Gastrocnemius medialis (tissue), 4 donors: ENCODE measurements at regions of chr2 and their contacts with region 1.

Region 1: DNA sequence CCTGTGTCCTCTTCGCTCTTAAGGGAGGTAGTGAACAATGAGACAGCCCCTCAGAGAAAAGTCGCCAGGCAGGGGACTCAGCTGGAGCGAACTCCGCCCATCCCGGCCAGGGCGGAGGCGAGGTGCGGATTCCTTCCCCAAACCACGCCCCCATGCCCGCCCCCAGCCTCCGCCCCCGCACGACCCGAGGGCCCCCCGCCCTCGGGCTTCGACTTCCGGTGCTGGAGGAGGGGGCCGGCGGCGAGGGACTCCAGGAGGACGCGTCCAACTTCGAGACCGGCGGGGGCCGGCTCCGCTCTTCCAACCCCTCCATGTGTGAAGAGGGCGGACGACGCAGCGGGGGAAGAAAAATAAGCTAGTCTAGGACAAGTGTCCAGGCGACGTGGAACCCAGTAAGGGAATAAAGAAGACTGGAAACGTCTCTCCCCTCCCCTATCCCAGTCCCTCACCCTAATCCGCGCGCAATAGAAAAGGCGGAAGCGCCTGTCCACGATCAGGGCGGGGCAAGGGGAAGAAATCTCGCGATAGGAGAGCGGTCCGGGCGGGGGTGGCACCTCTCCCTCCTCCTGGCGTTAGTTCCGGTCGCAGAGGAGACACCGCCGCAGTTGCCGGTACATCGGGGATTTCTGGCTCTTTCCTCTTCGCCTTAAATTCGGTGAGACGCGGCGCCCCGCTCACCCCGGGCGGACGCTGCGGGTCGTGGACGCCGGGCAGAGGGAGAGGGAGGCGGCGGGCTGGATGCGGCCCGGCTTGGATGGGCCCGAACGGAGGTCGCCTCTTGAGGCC is at the start of gene BZW1:
- DNase-seq: peak; percentile 95
- ATAC-seq: peak; percentile 86 to 88
- H3K4me3 ChIP-seq: peak within 1 kb of the TSS; percentile 77 to 98 (median 92)
- H3K27ac ChIP-seq: peak within 1 kb of the TSS; percentile 95 to 99 (median 98)
- H3K4me1 ChIP-seq: peaks cover 31 to 34% of the 10 kb centered on the region in 2 donors
- H3K27me3 ChIP-seq: no peaks in the 10 kb centered on the region
- CTCF ChIP-seq: no peak
- POLR2A ChIP-seq: peak; percentile 95 to 96
- total RNA-seq, gene BZW1: 204 to 317 (median 240) TPM

Region 2: GRCh38 chr2:200713003-200713703 is 98.4 kb before region 1 on chr2:
- in situ Hi-C with region 1: loop called (anchors 10 to 25 kb)
- intact Hi-C with region 1: loop called (anchors 1 kb)
- DNase-seq: peak; percentile 83 to 89
- ATAC-seq: peak; percentile 99 to 100
- H3K4me3 ChIP-seq: peak overlapping the region; percentile 33 to 51 (median 42)
- H3K27ac ChIP-seq: peak overlapping the region; percentile 70 to 82 (median 74)
- H3K4me1 ChIP-seq: peaks cover 0 to 3% of the 10 kb centered on the region in 2 donors
- H3K27me3 ChIP-seq: no peaks in the 10 kb centered on the region
- CTCF ChIP-seq: peak; percentile 73 to 89 (median 86)
- POLR2A ChIP-seq: peak; percentile 66 to 80

Region 3: DNA sequence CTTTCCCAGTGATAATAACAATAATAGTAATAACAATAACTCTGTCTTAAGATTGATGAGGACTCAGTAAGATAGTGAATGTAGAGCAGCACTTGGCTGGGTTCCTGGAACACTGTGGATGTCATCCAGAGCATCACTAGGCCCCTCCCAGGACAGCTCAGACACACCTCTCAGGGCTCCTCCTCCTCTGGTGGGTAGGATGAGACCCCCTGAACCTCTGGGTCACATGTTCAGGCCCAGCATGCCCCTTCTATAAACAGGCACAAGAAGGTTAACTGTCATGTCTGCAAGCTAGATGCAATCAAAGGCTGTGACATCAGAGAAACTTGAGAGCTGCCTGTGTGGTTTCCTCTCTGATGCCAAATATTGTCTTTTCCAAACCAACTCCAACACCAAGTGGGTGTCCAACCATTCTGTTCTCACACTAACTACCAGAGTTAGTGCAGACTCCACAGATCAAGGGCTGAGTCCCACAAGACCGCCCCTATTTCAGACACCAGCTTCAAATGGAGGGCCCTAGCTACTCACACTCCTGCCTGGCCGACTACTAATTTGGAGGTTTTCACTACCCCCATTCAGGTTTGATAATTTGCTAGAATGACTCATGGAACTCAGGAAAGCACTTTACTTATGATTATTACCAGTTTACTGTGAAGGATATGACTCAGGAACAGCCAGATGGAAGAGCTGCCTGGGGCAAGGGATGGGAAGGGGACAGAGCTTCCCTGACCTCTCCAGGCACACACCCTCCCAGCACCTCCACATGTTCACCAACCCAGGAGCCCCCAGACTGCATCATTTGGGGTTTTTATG is 46.2 kb before region 1 on chr2:
- in situ Hi-C with region 1: no loop called
- intact Hi-C with region 1: loop called (anchors 1 kb)
- DNase-seq: peak in 1 of 2 donors; percentile 50
- ATAC-seq: peak in 1 of 2 donors; percentile 49
- H3K4me3 ChIP-seq: no peak overlapping the region
- H3K27ac ChIP-seq: peak overlapping the region; percentile 75 to 86 (median 82)
- H3K4me1 ChIP-seq: peaks cover 19 to 23% of the 10 kb centered on the region in 2 donors
- H3K27me3 ChIP-seq: no peaks in the 10 kb centered on the region
- CTCF ChIP-seq: no peak
- POLR2A ChIP-seq: no peak

Region 4: DNA sequence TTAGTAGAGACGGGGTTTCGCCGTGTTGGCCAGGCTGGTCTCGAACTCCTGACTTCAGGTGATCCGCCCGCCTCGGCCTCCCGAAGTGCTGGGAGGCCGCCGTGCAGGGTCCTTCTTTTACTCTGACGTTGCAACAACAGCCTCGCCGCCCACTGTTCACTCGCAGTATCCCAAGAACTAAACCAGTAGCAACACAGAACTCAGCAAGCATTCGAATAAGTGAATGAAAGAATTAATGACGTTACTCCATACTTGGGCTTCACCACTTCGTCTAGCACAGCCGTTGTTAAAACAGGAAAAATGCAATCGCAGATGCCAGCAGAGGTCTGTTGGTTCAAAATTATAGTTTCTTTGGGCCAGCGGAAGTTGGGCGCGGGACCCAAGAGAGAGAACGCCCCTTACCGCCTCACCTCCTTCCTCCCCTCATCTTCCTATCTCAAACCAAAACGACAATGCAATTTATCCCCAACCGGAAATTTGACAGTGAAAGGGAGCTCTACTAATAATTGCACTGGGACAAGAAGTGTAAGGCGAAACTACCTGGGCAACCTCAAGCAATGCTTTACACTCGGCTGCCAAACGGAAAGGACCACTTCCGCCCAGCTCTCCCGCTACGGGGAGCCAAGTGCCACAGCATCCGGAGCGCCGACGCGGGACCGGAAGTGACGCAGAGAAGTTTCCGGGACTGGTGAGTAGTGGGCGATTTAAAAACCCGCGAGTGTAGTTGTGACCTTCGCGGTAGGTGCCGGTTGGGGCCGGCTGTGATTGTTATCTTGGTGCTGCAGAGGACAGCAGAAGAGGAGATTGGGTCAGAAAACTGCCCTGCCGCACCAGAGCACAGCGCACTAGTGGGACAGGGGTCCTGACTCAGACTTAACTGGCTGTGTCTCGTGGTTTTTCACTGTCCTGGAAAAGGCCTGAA is 77.4 kb after region 1 on chr2 and contains the starts of genes NIF3L1 and PPIL3:
- in situ Hi-C with region 1: no loop called
- intact Hi-C with region 1: loop called (anchors 2 kb)
- DNase-seq: peak; percentile 90 to 93
- ATAC-seq: peak; percentile 95 to 97
- H3K4me3 ChIP-seq: peak within 1 kb of the TSS; percentile 60 to 91 (median 74)
- H3K27ac ChIP-seq: peak within 1 kb of the TSS; percentile 90 to 94 (median 94)
- H3K4me1 ChIP-seq: peaks cover 13 to 22% of the 10 kb centered on the region in 2 donors
- H3K27me3 ChIP-seq: no peaks in the 10 kb centered on the region
- CTCF ChIP-seq: no peak
- POLR2A ChIP-seq: peak; percentile 50 to 57
- total RNA-seq, gene NIF3L1: 17.0 to 28.7 (median 22.4) TPM
- total RNA-seq, gene PPIL3: 8.4 to 29.2 (median 14.3) TPM

Region 5: GRCh38 chr2:201018636-201019035 is 207.1 kb after region 1 on chr2:
- in situ Hi-C with region 1: no loop called
- intact Hi-C with region 1: no loop called
- DNase-seq: no peak
- ATAC-seq: no peak
- H3K4me3 ChIP-seq: no peak overlapping the region
- H3K27ac ChIP-seq: no peak overlapping the region
- H3K4me1 ChIP-seq: no peaks in the 10 kb centered on the region
- H3K27me3 ChIP-seq: no peaks in the 10 kb centered on the region
- CTCF ChIP-seq: no peak
- POLR2A ChIP-seq: no peak

Region 6: GRCh38 chr2:201118121-201118960 is 306.8 kb after region 1 on chr2:
- in situ Hi-C with region 1: no loop called
- intact Hi-C with region 1: loop called (anchors 5 kb)
- DNase-seq: peak; percentile 95 to 98
- ATAC-seq: peak; percentile 53
- H3K4me3 ChIP-seq: peak overlapping the region; percentile 70 to 95 (median 82)
- H3K27ac ChIP-seq: peak overlapping the region; percentile 95 to 100 (median 98)
- H3K4me1 ChIP-seq: peaks cover 30 to 33% of the 10 kb centered on the region in 2 donors
- H3K27me3 ChIP-seq: no peaks in the 10 kb centered on the region
- CTCF ChIP-seq: peak in 3 of 5 experiments; percentile 35 to 49 (median 37)
- POLR2A ChIP-seq: peak; percentile 68 to 87